ENCODE measurements at regions of chr1 and their contacts with region 1.

Region 1: GRCh38 chr1:32321712-32322291 is 14.2 kb downstream of the MARCKSL1 start:
- DNase-seq: no peak
- ATAC-seq: peak; percentile 35
- H3K4me3 ChIP-seq: peak overlapping the region in 3 of 5 experiments; percentile 5 to 34 (median 12)
- H3K4me3 Mint-ChIP-seq: peak overlapping the region; percentile 80
- H3K27ac ChIP-seq: peak overlapping the region; percentile 59 to 63
- H3K27ac Mint-ChIP-seq: peak overlapping the region; percentile 89
- H3K4me1 ChIP-seq: peaks cover 70 to 78% of the 10 kb centered on the region in 2 donors
- H3K4me1 Mint-ChIP-seq: peaks cover 57% of the 10 kb centered on the region
- H3K27me3 ChIP-seq: no peaks in the 10 kb centered on the region
- H3K27me3 Mint-ChIP-seq: no peaks in the 10 kb centered on the region
- CTCF ChIP-seq: no peak

Region 2: DNA sequence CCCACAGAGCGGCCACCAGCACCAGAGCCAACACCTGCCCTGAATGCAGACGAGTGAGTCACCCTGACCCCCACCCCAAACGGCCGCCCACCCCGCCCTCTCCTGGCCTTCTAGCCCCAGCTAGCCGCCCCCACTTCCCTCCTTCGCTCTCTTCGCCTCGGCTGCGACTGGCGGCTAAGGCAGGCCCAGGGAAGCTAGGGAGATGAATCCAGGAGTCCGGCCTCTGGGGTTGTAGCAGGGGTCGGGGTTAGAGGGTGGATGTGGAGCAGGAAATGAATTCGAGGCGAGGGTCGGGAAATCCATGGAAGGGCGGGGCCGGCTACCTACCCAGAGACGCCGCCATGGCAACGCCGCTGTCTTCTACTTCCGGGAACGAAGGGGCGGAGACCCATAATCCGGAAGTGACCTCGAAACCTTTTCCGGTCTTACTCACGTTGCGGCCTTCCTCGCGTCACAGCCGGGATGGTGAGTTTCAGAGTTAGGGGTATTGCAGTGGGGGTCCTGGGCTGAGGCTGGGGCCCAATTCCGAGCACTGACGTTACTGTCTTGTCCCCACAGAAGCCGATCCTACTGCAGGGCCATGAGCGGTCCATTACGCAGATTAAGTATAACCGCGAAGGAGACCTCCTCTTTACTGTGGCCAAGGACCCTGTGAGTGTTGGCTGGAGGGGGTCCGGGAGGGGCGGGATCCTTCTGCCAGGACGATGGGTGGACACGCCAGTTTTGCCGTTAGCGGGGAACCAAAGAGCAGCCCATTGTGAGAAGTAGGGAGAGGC is 99.6 kb before region 1 on chr1 and contains the starts of genes EIF3I and TMEM234:
- CTCF ChIA-PET with region 1: interaction called, 38 read pairs
- POLR2A ChIA-PET with region 1: interaction called, 4 read pairs
- intact Hi-C with region 1: no loop called
- DNase-seq: peak; percentile 94
- ATAC-seq: peak; percentile 86
- H3K4me3 ChIP-seq: peak within 1 kb of the TSS; percentile 61 to 99 (median 93)
- H3K4me3 Mint-ChIP-seq: peak within 1 kb of the TSS; percentile 97
- H3K27ac ChIP-seq: peak within 1 kb of the TSS; percentile 72 to 94
- H3K27ac Mint-ChIP-seq: peak within 1 kb of the TSS; percentile 98
- H3K4me1 ChIP-seq: peaks cover 28 to 30% of the 10 kb centered on the region in 2 donors
- H3K4me1 Mint-ChIP-seq: peaks cover 43% of the 10 kb centered on the region
- H3K27me3 ChIP-seq: no peaks in the 10 kb centered on the region
- H3K27me3 Mint-ChIP-seq: no peaks in the 10 kb centered on the region
- CTCF ChIP-seq: no peak
- total RNA-seq, gene EIF3I: 87.0 and 91.0 TPM in 2 replicates
- total RNA-seq, gene TMEM234: 50.4 and 60.8 TPM in 2 replicates

Region 3: DNA sequence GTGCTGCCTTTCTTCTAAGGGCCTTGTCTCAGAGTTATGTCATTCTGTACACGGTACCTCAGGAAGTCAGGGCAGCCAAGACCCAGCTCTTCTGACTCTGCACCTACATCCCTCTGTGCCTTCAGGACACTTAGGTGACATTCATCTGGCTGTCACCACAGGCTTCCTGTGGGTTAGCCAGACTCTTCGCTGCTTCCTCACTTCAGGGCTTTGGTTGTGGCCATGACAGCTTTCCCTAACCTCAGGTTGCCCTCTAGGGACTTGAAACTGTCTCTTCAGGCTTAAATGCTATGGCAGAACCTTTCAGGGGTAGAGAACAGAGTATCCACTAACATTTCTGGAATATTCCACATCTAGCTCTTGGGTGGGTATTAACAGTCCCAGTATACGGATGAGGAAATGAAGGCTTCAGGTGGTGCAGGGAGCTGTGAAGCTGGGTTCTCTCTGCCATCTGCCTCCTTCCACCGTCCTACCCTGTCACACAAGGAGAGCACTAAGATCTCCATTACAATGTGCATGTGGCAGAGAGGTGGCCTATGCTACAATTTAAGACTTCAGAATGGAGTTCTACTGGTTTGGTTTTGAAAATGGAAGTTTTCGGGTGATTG is 50.5 kb after region 1 on chr1:
- CTCF ChIA-PET with region 1: interaction called, 9 read pairs
- POLR2A ChIA-PET with region 1: no interaction called
- intact Hi-C with region 1: loop called (anchors 5 kb)
- DNase-seq: peak; percentile 66
- ATAC-seq: peak; percentile 75
- H3K4me3 ChIP-seq: no peak overlapping the region
- H3K4me3 Mint-ChIP-seq: no peak overlapping the region
- H3K27ac ChIP-seq: no peak overlapping the region
- H3K27ac Mint-ChIP-seq: no peak overlapping the region
- H3K4me1 ChIP-seq: peaks cover 10 to 13% of the 10 kb centered on the region in 2 donors
- H3K4me1 Mint-ChIP-seq: peaks cover 12% of the 10 kb centered on the region
- H3K27me3 ChIP-seq: no peaks in the 10 kb centered on the region
- H3K27me3 Mint-ChIP-seq: no peaks in the 10 kb centered on the region
- CTCF ChIP-seq: no peak

Region 4: GRCh38 chr1:32592943-32593342 is 271.1 kb after region 1 on chr1:
- CTCF ChIA-PET with region 1: no interaction called
- POLR2A ChIA-PET with region 1: no interaction called
- intact Hi-C with region 1: no loop called
- DNase-seq: no peak
- ATAC-seq: no peak
- H3K4me3 ChIP-seq: no peak overlapping the region
- H3K4me3 Mint-ChIP-seq: no peak overlapping the region
- H3K27ac ChIP-seq: no peak overlapping the region
- H3K27ac Mint-ChIP-seq: no peak overlapping the region
- H3K4me1 ChIP-seq: no peaks in the 10 kb centered on the region
- H3K4me1 Mint-ChIP-seq: no peaks in the 10 kb centered on the region
- H3K27me3 ChIP-seq: no peaks in the 10 kb centered on the region
- H3K27me3 Mint-ChIP-seq: no peaks in the 10 kb centered on the region
- CTCF ChIP-seq: no peak